Mammary epithelial cell (primary cell): ENCODE measurements at regions of chr1 and their contacts with region 1.

Region 1: GRCh38 chr1:156608036-156608674 is 6.9 kb upstream of the GPATCH4 start:
- DNase-seq: peak; percentile 60
- H3K4me3 ChIP-seq: no peak overlapping the region
- H3K27ac ChIP-seq: no peak overlapping the region
- H3K4me1 ChIP-seq: peaks cover under 1% of the 10 kb centered on the region
- H3K27me3 ChIP-seq: no peaks in the 10 kb centered on the region
- CTCF ChIP-seq: peak; percentile 85 to 95

Region 2: DNA sequence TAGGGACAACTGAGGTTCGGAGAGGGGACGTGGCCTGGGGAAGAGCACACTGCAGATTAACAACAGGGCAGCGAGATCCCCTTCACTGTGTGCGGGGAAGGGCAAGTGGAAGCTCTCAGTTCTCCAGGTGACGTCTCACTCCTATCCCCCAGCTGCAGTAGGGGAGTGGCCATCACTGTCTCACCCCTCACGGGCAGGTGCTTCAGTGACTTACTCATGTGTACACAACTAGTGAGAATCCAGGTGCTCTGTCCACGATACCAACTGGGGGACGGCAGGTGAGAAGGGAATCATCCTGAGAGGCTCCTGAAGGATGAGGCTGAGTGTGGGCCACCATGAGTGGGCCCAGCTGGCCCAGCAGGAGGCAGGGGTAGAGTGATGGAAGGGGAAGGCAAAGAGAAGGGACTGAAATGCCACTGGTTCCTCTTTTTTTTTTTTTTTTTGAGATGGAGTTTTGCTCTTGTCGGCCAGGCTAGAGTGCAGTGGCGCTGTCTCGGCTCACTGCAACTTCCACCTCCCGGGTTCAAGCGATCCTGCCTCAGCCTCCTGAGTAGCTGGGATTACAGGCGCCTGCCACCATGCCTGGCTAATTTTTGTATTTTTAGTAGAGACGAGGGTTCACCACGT is 213.2 kb before region 1 on chr1:
- CTCF ChIA-PET with region 1: no interaction called
- dilution Hi-C with region 1: no loop called
- in situ Hi-C with region 1: no loop called
- intact Hi-C with region 1: no loop called
- DNase-seq: no peak
- H3K4me3 ChIP-seq: no peak overlapping the region
- H3K27ac ChIP-seq: no peak overlapping the region
- H3K4me1 ChIP-seq: no peaks in the 10 kb centered on the region
- H3K27me3 ChIP-seq: no peaks in the 10 kb centered on the region
- CTCF ChIP-seq: no peak

Region 3: DNA sequence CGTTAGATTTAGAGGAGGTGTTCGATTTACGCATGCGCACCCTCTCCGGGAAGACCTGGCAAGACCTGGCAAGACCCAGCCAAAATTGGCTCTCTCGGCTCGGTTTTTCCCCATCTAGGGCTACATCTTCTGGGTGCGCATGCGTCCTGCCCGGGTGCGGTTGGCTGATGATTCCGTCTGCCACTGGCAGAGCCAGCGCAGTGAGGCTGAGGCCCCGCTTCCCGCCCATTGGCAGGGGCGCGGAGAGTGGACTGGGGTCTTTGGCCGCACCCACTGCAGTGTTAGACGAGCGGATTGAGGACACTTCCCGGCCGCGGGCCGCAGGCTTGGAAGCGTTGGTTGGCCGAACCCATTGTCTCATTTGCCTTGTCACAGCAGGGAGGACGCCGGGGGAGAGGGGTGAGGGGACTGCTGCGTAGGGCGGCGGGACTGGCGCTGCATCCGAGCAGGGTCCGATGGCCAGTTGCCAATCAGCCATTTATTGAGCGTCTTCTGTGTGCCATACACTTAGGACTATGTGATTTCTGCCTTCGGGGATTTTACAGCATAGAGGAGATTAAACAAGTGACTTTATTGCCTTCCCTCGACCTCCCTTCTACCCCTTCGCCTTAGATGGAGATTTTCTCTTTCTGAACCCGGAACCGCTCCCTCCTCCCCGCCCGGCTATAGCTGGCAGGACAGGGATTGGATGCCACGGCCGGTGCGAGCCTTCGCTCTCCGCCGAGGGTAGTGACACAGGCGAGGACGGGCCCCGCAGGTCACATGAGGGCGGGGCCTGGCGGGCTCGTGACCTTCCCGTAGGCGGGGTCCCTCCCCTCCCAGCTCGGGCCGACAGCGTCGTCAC is 151.3 kb before region 1 on chr1:
- CTCF ChIA-PET with region 1: no interaction called
- dilution Hi-C with region 1: no loop called
- in situ Hi-C with region 1: loop called in 1 of 2 experiments (anchors 5 kb)
- intact Hi-C with region 1: loop called (anchors 1 kb)
- DNase-seq: peak; percentile 97
- H3K4me3 ChIP-seq: peak overlapping the region; percentile 22 to 50 (median 43)
- H3K27ac ChIP-seq: peak overlapping the region; percentile 54
- H3K4me1 ChIP-seq: peaks cover 12% of the 10 kb centered on the region
- H3K27me3 ChIP-seq: no peaks in the 10 kb centered on the region
- CTCF ChIP-seq: no peak

Region 4: GRCh38 chr1:156500797-156501499 is 107.2 kb before region 1 on chr1:
- CTCF ChIA-PET with region 1: no interaction called
- dilution Hi-C with region 1: no loop called
- in situ Hi-C with region 1: no loop called
- intact Hi-C with region 1: loop called (anchors 2 kb)
- DNase-seq: peak; percentile 94
- H3K4me3 ChIP-seq: peak overlapping the region; percentile 75 to 95 (median 84)
- H3K27ac ChIP-seq: peak overlapping the region; percentile 93
- H3K4me1 ChIP-seq: peaks cover 58% of the 10 kb centered on the region
- H3K27me3 ChIP-seq: no peaks in the 10 kb centered on the region
- CTCF ChIP-seq: peak; percentile 28 to 66

Region 5: GRCh38 chr1:156528041-156528630 is 80.0 kb before region 1 on chr1:
- CTCF ChIA-PET with region 1: no interaction called
- dilution Hi-C with region 1: no loop called
- in situ Hi-C with region 1: no loop called
- intact Hi-C with region 1: no loop called
- DNase-seq: no peak
- H3K4me3 ChIP-seq: no peak overlapping the region
- H3K27ac ChIP-seq: no peak overlapping the region
- H3K4me1 ChIP-seq: no peaks in the 10 kb centered on the region
- H3K27me3 ChIP-seq: no peaks in the 10 kb centered on the region
- CTCF ChIP-seq: no peak

Region 6: DNA sequence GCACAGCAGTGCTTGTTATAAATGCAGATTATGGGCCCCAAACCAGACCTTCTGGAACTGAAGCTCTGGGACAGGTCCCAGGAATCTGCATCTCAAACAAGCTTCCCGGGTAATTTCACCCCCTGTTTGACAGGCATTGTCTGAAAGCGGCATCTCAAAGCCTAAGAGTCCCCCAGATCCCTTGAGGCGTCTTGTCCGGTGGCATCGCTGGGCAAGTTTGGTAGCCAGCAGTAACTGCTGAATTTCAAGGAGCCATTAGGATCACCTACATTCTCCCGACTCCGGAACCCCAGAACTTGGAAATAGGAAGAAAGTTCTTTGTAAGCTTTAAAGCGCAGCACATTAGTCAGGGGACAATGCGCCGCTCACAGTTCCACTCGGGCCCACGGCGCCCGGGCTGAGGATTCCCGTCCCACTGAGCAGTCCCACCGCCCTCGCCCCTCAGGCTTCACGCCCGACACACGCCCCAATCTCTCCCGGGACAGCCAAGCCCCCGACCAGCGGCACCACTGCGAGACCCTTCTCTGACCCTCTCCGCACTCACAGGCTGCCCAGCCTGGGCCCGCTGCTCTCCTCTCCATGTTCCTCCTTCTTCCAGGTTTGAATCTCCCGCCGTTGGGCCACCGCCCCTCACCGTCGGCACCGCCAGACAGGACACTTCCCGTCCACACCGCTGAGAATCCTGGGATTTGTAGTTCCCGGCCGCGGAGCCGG is 36.0 kb before region 1 on chr1 and contains the start of gene IQGAP3:
- CTCF ChIA-PET with region 1: no interaction called
- dilution Hi-C with region 1: loop called (anchors 5 kb)
- in situ Hi-C with region 1: no loop called
- intact Hi-C with region 1: no loop called
- DNase-seq: peak; percentile 81
- H3K4me3 ChIP-seq: peak within 1 kb of the TSS; percentile 66 to 88 (median 76)
- H3K27ac ChIP-seq: peak within 1 kb of the TSS; percentile 76
- H3K4me1 ChIP-seq: peaks cover 16% of the 10 kb centered on the region
- H3K27me3 ChIP-seq: no peaks in the 10 kb centered on the region
- CTCF ChIP-seq: no peak
- total RNA-seq, gene IQGAP3: 1.3 to 35.7 TPM

Region 7: GRCh38 chr1:156583821-156584622 is 24.1 kb before region 1 on chr1:
- CTCF ChIA-PET with region 1: no interaction called
- dilution Hi-C with region 1: no loop called
- in situ Hi-C with region 1: no loop called
- intact Hi-C with region 1: loop called (anchors 1 kb)
- DNase-seq: peak; percentile 56
- H3K4me3 ChIP-seq: no peak overlapping the region
- H3K27ac ChIP-seq: no peak overlapping the region
- H3K4me1 ChIP-seq: no peaks in the 10 kb centered on the region
- H3K27me3 ChIP-seq: no peaks in the 10 kb centered on the region
- CTCF ChIP-seq: peak; percentile 89

Region 8: DNA sequence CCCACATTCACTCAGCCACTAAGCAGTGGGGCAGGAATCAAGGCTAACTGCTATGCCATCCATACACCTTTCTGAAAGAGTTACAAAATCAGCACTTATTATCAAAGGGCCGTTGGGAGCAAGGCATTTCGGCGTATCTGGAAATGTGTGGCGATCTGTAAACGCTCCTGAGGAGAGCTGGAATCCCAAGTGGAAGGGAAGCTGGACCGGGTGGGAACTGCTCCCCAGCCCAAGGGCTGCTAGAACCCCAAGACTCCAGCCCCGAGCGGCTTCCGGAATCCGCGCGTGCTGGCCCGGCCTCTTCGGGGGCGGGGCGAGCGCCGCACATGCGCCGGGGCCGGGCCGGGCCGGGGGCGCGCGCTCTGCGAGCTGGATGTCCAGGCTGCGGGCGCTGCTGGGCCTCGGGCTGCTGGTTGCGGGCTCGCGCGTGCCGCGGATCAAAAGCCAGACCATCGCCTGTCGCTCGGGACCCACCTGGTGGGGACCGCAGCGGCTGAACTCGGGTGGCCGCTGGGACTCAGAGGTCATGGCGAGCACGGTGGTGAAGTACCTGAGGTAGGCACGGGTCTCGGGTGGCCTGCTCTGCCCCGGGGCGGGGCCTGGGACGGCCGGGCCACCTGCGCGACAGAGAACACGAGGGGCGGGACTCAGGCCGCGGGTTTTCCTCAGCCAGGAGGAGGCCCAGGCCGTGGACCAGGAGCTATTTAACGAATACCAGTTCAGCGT is 16.6 kb before region 1 on chr1 and contains the start of gene NAXE:
- CTCF ChIA-PET with region 1: no interaction called
- dilution Hi-C with region 1: no loop called
- in situ Hi-C with region 1: no loop called
- intact Hi-C with region 1: loop called (anchors 1 kb)
- DNase-seq: peak; percentile 62
- H3K4me3 ChIP-seq: peak within 1 kb of the TSS; percentile 70 to 80 (median 77)
- H3K27ac ChIP-seq: peak within 1 kb of the TSS; percentile 32
- H3K4me1 ChIP-seq: peaks cover 11% of the 10 kb centered on the region
- H3K27me3 ChIP-seq: no peaks in the 10 kb centered on the region
- CTCF ChIP-seq: no peak
- total RNA-seq, gene NAXE: 68.7 to 87.1 TPM

Region 9: DNA sequence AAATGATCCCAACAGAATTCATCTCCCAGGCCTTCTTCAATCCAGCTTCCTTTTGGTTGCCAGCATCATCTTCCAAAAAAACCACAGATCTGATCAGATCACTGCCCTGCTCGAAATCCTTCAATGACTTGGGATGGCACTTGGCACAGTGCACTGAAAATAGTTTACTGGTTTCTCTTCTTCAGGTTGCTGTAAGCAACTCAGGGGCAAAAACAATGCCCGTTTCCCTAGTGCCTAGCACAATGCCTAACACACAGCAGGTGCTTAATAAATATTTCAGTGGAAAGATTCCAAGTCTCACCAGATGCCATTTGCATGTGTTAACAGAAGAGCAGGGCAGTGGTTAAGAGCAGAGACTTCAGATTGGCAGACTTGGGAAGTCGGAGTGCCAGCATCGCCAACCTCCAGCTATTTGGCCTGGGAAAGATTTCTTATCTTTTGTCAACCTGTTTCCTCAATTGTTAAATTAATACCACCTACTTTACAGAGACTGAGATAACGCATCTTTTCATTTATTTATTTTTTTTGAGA is 109.2 kb after region 1 on chr1:
- CTCF ChIA-PET with region 1: no interaction called
- dilution Hi-C with region 1: loop called (anchors 5 kb)
- in situ Hi-C with region 1: no loop called
- intact Hi-C with region 1: no loop called
- DNase-seq: no peak
- H3K4me3 ChIP-seq: no peak overlapping the region
- H3K27ac ChIP-seq: no peak overlapping the region
- H3K4me1 ChIP-seq: peaks cover 3% of the 10 kb centered on the region
- H3K27me3 ChIP-seq: no peaks in the 10 kb centered on the region
- CTCF ChIP-seq: no peak